ENCODE measurements at regions of chr10 and their contacts with region 1.

Region 1: DNA sequence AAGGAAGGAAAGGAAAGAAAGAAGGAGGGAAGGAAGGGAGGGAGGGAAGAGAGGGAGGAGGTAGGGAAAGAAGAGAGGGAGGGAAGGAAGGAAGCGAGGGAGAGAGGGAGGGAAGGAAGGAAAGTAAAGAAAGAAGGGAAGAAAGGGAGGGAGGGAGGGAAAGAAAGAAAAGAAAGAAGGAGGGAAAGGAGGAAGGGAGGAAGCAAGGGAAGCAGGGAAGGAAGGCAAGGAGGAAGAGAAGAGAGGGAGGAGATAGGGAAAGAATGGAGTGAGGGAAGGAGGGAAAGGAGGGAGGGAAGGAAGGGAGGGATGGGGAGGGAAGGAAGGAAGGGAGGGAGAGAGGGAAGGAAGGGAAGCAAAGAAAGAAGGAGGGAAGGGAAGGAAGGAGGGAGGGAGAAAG is 65.8 kb downstream of the MAP3K8 start:
- DNase-seq: no peak
- H3K4me3 ChIP-seq: no peak overlapping the region
- H3K27ac ChIP-seq: no peak overlapping the region
- H3K4me1 ChIP-seq: peaks cover 35% of the 10 kb centered on the region
- CTCF ChIP-seq: no peak

Region 2: DNA sequence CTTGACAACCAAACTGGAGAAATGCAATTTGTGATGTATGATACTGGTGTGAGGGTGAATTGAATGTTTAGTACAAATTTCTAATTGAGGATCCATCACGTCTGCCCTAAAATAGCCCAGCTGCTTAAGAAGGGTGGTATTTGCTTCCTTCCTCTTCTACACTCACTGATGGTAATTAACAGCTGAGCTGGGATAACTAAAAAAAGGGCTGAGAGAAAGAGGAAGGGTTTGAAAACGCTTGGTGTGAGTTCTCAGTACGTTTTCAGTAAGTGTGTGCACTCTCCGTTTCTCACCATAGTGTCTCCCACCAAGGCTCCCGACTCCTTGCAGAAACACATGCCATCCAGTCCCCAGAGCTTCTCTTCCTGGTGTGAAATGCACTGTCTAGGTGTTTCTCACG is 11.5 kb before region 1 on chr10:
- CTCF ChIA-PET with region 1: no interaction called
- POLR2A ChIA-PET with region 1: interaction called, 26 read pairs
- intact Hi-C with region 1: no loop called
- DNase-seq: peak; percentile 66
- H3K4me3 ChIP-seq: peak overlapping the region; percentile 36
- H3K27ac ChIP-seq: peak overlapping the region; percentile 55
- H3K4me1 ChIP-seq: peaks cover 59% of the 10 kb centered on the region
- CTCF ChIP-seq: no peak